HepG2 (cell line): ENCODE measurements at regions of chr18 and their contacts with region 1.

Region 1: DNA sequence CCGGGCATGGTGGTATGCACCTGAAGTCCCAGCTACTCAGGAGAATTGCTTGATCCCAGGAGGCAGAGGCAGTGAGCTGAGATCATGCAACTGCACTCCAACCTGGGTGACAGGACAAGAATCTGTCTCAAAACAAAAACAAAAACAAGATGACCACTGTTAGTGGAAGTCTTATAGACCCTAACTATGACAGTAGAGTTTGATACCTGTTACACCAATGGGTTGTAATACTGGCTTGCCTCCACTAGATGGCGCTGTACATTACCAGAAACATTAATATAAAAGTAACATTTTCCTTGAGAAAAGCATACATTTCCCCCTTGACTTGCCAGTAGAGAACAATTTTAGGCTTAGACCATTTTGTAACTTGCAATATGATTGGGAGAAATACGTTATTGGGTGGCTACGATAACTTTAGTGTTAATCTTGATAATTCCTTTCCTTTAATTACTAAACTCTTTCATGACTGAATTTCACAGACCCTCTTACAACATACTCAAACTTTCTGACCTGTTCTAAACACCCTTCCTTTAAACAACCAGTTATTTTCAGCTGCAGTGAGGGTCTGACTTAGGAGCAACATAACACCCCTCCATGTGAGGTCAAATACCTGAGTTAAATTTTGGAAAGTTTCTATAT is 19.5 kb downstream of the SLC25A52 start:
- DNase-seq: peak; percentile 41
- ATAC-seq: peak; percentile 46; the same call in 2 of the 3 replicates
- H3K4me3 ChIP-seq: no peak overlapping the region
- H3K27ac ChIP-seq: no peak overlapping the region
- H3K4me1 ChIP-seq: peaks cover 12% of the 10 kb centered on the region
- H3K27me3 ChIP-seq: peaks cover 0 to 5% of the 10 kb centered on the region in 2 experiments; a peak in 1 of 5 replicates
- CTCF ChIP-seq: peak; percentile 79
- EP300 ChIP-seq: no peak
- POLR2A ChIP-seq: no peak
- RAD21 ChIP-seq: peak; percentile 48; the same call in 1 of the 2 replicates

Region 2: DNA sequence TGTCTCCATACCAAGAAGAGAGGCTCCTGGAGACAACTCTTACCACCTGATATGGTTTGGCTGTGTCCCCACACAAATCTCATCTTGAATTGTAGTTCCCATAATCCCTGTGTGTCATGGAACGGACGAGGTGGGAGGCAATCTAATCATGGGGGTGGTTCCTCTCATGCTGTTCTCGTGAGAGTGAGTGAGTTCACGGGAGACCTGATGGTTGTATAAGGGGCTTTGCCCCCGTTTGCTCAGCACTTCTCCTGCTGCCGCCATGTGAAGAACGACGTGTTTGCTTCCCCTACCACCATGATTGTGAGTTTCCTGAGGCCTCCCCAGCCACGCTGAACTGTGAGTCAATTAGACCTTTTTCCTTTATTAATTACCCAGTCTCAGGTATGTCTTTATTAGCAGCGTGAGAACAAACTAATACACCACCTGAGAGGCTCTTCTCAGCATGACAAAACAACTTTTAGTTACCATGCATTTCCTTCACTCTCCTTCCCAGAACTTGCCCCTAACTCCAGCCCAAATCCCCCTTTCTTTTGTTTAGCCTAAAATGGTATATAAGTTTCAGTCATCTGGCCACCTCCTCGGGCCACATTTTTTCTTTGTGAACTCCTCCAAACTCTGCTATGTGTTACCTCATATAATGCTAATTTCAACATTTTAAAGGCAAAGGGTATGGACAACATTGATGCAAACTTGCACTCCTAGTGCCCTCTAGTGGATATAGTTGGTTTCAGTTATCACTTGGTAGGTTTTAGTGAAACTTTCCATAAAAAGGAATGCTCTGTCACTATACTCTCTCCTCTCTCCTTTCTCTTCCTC is 78.1 kb after region 1 on chr18:
- CTCF ChIA-PET with region 1: interaction called, 18 read pairs
- POLR2A ChIA-PET with region 1: no interaction called
- in situ Hi-C with region 1: loop called (anchors 10 kb)
- intact Hi-C with region 1: loop called (anchors 1 kb)
- DNase-seq: peak; percentile 59
- ATAC-seq: peak; percentile 81
- H3K4me3 ChIP-seq: no peak overlapping the region
- H3K27ac ChIP-seq: no peak overlapping the region
- H3K4me1 ChIP-seq: peaks cover 15% of the 10 kb centered on the region
- H3K27me3 ChIP-seq: no peaks in the 10 kb centered on the region
- CTCF ChIP-seq: peak; percentile 81
- EP300 ChIP-seq: no peak
- POLR2A ChIP-seq: no peak
- RAD21 ChIP-seq: peak; percentile 49; the same call in 1 of the 2 replicates

Region 3: GRCh38 chr18:31954349-31954748 is 213.1 kb after region 1 on chr18:
- CTCF ChIA-PET with region 1: interaction called, 3 read pairs
- POLR2A ChIA-PET with region 1: no interaction called
- in situ Hi-C with region 1: loop called (anchors 10 kb)
- intact Hi-C with region 1: loop called (anchors 1 kb)
- DNase-seq: peak; percentile 79
- ATAC-seq: peak; percentile 75
- H3K4me3 ChIP-seq: no peak overlapping the region
- H3K27ac ChIP-seq: no peak overlapping the region
- H3K4me1 ChIP-seq: peaks cover 38% of the 10 kb centered on the region
- H3K27me3 ChIP-seq: no peaks in the 10 kb centered on the region
- CTCF ChIP-seq: no peak
- EP300 ChIP-seq: peak in 1 of 2 experiments; percentile 50; a peak in 1 of 4 replicates
- POLR2A ChIP-seq: no peak
- RAD21 ChIP-seq: no peak

Region 4: DNA sequence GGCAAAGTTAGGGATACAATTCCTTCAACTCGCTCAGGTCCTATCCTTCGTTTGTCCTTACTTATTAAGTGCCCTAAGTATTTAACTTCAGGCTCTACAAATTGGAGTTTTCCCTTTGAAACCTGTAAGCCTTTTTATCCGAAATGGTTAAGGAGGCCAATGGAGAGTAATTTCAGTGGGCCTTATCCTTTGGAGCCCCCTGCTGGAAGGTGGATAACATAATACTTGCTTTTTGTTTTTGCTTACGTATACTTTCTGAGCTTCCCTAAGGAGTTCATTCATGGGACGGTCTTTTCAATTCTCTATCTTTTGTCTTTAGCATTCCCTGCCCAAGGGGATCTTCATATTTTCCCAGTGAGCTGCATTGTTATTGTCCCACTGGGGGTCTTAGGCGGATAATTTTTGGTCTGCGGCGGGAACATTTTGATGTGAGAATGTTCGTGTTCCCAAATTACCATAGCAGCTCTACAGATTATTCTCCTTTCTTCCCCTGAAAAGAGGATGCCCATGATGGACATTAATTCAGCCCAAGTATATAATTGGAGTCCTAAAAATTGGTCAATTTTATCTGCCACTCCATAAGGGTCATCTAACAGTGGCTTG is 236.2 kb after region 1 on chr18:
- CTCF ChIA-PET with region 1: interaction called, 8 read pairs
- POLR2A ChIA-PET with region 1: no interaction called
- in situ Hi-C with region 1: no loop called
- intact Hi-C with region 1: loop called (anchors 1 kb)
- DNase-seq: peak; percentile 68
- ATAC-seq: peak; percentile 83
- H3K4me3 ChIP-seq: no peak overlapping the region
- H3K27ac ChIP-seq: no peak overlapping the region
- H3K4me1 ChIP-seq: no peaks in the 10 kb centered on the region
- H3K27me3 ChIP-seq: 0 out of 5 replicates have a peak, but pooled peaks cover 0 to 4% of the 10 kb centered on the region in 2 experiments
- CTCF ChIP-seq: peak; percentile 77
- EP300 ChIP-seq: no peak
- POLR2A ChIP-seq: no peak
- RAD21 ChIP-seq: peak; percentile 67